ENCODE measurements at regions of chr3 and their contacts with region 1.

Region 1: GRCh38 chr3:137970914-137971831 is 38.8 kb upstream of the CLDN18 start:
- DNase-seq: no peak
- H3K4me3 ChIP-seq: no peak overlapping the region
- CTCF ChIP-seq: peak; percentile 91

Region 2: GRCh38 chr3:137110484-137110883 is 860.7 kb before region 1 on chr3:
- CTCF ChIA-PET with region 1: interaction called, 16 read pairs
- POLR2A ChIA-PET with region 1: no interaction called
- DNase-seq: no peak
- H3K4me3 ChIP-seq: no peak overlapping the region
- CTCF ChIP-seq: peak; percentile 75

Region 3: DNA sequence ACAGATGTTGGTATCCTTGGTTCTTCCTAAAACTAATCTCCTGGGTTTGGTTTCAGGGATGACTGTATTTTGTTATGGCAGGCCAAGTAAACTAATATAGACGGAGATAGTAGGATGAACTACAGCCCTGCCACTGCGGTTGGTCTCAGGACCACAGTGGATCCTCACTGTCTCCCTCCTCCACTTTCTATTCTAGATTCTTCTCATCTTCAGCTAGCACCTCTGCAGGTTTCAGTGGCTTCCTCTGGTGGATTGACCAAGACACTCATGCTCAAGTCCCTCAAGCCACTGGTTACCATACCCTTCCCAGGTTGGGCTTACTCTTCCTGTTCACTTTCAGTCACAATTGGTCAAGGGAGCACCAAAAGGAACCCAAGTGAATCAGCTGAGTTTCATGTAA is 32.3 kb before region 1 on chr3:
- CTCF ChIA-PET with region 1: no interaction called
- POLR2A ChIA-PET with region 1: no interaction called
- DNase-seq: no peak
- H3K4me3 ChIP-seq: no peak overlapping the region
- CTCF ChIP-seq: no peak

Region 4: DNA sequence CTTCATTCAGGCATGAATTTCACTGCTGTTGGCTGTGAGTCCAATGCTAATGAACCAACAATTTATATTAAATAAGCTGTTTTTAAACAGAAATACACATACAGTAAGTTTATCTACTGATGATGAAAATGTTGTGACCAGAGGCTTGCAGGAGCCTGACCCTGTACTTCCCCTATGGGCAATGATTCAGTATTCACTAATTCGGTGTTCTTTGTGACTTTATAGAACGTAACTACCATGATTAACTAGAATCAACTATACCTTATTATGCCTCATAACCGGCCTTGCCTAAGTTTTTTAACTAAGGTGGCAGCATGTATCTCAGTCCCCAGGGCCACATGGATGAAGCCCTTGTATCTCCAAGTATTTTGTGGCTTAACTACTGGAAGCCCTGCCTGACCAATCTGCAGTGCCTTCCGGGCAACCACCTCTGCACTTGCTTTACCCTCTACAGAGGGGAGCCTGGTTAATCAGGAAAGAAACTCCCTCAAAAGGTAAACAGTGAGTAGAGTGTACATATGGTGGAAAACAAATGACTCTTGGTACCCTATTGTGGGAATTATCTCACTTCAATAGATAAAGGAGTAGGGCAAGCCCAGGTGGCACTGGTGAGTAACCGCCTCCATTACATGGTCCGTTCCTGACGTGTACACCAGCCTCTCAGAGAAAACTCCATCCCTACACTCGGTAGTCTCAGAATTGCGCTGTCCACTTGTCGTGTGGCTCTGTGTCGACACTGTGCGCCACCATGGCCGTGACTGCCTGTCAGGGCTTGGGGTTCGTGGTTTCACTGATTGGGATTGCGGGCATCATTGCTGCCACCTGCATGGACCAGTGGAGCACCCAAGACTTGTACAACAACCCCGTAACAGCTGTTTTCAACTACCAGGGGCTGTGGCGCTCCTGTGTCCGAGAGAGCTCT is 27.2 kb after region 1 on chr3:
- CTCF ChIA-PET with region 1: interaction called, 13 read pairs
- POLR2A ChIA-PET with region 1: no interaction called
- DNase-seq: no peak
- H3K4me3 ChIP-seq: no peak overlapping the region
- CTCF ChIP-seq: no peak

Region 5: GRCh38 chr3:138060792-138061191 is 89.6 kb after region 1 on chr3:
- CTCF ChIA-PET with region 1: no interaction called
- POLR2A ChIA-PET with region 1: no interaction called
- DNase-seq: no peak
- H3K4me3 ChIP-seq: no peak overlapping the region
- CTCF ChIP-seq: no peak

Measured in AG04449 (cell line).